Mammary epithelial cell (primary cell): ENCODE measurements at regions of chrX and their contacts with region 1.

Region 1: DNA sequence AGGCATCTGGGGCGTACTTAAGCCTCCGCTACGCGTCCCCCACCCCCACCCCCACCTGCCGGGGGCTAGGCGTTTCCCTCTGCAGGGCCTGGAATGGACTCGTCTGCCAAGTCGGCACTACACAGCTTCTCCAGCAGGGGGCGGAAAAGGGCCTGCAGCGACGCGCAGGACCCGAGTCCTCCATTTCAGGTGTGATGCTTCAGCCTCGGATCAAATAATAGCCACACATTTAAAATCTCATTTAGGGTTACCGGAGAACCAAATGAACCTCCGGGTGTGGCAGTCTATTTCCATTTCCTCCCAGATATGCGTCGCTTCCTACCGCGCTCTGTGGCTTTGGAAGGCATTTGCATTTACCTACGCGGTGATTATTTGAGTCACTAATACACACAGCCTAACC is 2.9 kb downstream of the PAK3 start:
- DNase-seq: no peak
- H3K4me3 ChIP-seq: no peak overlapping the region
- H3K27ac ChIP-seq: no peak overlapping the region
- H3K4me1 ChIP-seq: no peaks in the 10 kb centered on the region
- H3K27me3 ChIP-seq: no peaks in the 10 kb centered on the region
- CTCF ChIP-seq: peak; percentile 59 to 61

Region 2: DNA sequence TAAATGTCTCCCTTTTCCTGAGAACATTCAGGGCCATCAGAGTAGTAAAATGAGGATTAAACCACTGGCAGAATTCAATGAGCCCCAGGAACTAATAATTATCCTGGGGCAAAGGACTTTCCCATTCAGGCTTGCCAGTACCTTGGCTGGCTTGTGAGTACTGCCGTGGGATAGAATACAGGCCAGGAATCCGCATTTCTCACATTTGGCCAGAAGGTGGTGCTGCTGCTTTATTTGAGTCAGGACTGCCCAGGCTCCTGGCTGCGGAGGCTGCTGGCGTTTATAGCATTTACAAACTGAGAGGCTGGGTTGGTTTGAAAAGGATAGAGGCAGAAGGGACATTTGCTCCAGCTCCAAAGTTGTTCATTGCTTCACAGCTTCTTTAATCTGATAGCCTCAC is 648.8 kb before region 1 on chrX:
- CTCF ChIA-PET with region 1: no interaction called
- dilution Hi-C with region 1: no loop called
- in situ Hi-C with region 1: no loop called
- intact Hi-C with region 1: loop called (anchors 1 kb)
- DNase-seq: peak; percentile 60
- H3K4me3 ChIP-seq: no peak overlapping the region
- H3K27ac ChIP-seq: no peak overlapping the region
- H3K4me1 ChIP-seq: peaks cover 1% of the 10 kb centered on the region
- H3K27me3 ChIP-seq: peaks cover 2% of the 10 kb centered on the region
- CTCF ChIP-seq: peak; percentile 78 to 82

Region 3: GRCh38 chrX:110853610-110854009 is 245.3 kb before region 1 on chrX:
- CTCF ChIA-PET with region 1: interaction called, 12 read pairs
- dilution Hi-C with region 1: no loop called
- in situ Hi-C with region 1: loop called (anchors 10 kb)
- intact Hi-C with region 1: no loop called
- DNase-seq: peak; percentile 42
- H3K4me3 ChIP-seq: no peak overlapping the region
- H3K27ac ChIP-seq: no peak overlapping the region
- H3K4me1 ChIP-seq: no peaks in the 10 kb centered on the region
- H3K27me3 ChIP-seq: no peaks in the 10 kb centered on the region
- CTCF ChIP-seq: peak; percentile 42 to 66

Region 4: DNA sequence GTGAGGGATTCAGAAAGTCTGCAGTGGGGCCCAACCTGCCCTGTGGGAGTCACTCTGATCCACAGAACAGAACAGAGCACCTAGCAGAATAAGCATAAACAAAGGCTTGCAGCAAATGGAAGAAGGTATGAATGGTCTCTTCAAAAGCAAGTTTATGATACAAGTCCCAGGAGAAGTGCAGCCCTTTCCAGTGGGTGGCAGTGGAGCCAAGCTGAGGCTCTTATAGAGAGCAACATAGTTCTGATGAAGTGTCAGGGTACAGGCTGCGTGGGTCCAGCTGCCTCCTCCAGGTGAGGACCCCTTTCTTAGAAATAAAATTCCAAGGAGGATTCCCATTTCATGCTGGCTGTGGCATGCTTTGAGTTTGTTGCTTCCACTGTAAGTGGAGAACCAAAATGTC is 91.6 kb before region 1 on chrX:
- CTCF ChIA-PET with region 1: interaction called, 4 read pairs
- dilution Hi-C with region 1: no loop called
- in situ Hi-C with region 1: no loop called
- intact Hi-C with region 1: loop called (anchors 1 kb)
- DNase-seq: no peak
- H3K4me3 ChIP-seq: no peak overlapping the region
- H3K27ac ChIP-seq: no peak overlapping the region
- H3K4me1 ChIP-seq: no peaks in the 10 kb centered on the region
- H3K27me3 ChIP-seq: peaks cover 3% of the 10 kb centered on the region
- CTCF ChIP-seq: no peak

Region 5: DNA sequence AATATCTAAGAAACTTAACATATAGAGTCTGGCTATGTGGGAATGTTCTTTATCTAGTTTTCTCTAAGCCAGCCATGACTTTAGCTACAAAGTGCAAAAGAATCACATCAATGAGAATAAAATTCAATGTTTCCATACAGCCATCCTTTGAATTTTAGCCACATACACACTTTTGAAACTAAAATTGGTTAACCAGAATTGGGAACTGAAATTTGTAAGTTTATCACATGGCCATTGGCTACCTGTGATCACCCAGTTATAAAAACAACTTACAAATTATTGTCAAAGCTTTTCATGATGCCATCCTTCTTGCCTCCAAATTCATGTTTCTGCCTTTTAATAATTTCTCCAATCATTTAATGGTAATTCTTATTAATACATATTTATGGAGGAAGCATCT is 47.0 kb after region 1 on chrX:
- CTCF ChIA-PET with region 1: no interaction called
- dilution Hi-C with region 1: no loop called
- in situ Hi-C with region 1: no loop called
- intact Hi-C with region 1: no loop called
- DNase-seq: no peak
- H3K4me3 ChIP-seq: no peak overlapping the region
- H3K27ac ChIP-seq: no peak overlapping the region
- H3K4me1 ChIP-seq: no peaks in the 10 kb centered on the region
- H3K27me3 ChIP-seq: no peaks in the 10 kb centered on the region
- CTCF ChIP-seq: no peak

Region 6: GRCh38 chrX:111168314-111168713 is 69.4 kb after region 1 on chrX:
- CTCF ChIA-PET with region 1: no interaction called
- dilution Hi-C with region 1: no loop called
- in situ Hi-C with region 1: no loop called
- intact Hi-C with region 1: no loop called
- DNase-seq: peak; percentile 12
- H3K4me3 ChIP-seq: no peak overlapping the region
- H3K27ac ChIP-seq: no peak overlapping the region
- H3K4me1 ChIP-seq: no peaks in the 10 kb centered on the region
- H3K27me3 ChIP-seq: no peaks in the 10 kb centered on the region
- CTCF ChIP-seq: peak in 1 of 2 donors; percentile 49

Region 7: DNA sequence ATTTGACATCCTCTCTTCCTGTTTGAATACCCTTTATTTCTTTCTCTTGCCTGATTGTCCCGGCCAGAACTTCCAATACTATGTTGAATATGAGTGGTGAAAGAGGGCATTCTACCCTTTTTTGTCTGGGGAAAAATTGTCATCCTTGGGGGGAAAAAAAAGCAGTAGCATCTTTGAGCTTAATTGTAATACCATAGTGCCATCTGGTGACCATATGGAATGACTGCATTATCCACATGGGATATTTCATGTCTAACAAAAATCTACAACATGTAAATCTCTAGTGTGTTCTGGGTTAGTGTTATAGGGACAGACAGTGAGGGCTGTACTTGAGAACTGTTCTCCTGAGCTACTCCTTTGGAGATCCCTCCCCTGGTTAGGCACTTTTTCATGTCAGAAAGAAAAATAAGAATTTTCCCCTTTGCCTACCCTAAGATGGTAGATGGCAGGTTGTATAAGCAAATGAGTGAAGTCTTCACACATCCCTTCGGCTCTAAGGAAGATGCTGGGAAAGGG is 145.4 kb after region 1 on chrX:
- CTCF ChIA-PET with region 1: no interaction called
- dilution Hi-C with region 1: no loop called
- in situ Hi-C with region 1: no loop called
- intact Hi-C with region 1: loop called (anchors 5 kb)
- DNase-seq: peak; percentile 5
- H3K4me3 ChIP-seq: no peak overlapping the region
- H3K27ac ChIP-seq: no peak overlapping the region
- H3K4me1 ChIP-seq: no peaks in the 10 kb centered on the region
- H3K27me3 ChIP-seq: no peaks in the 10 kb centered on the region
- CTCF ChIP-seq: peak; percentile 62 to 63